ENCODE measurements at regions of chr2 and their contacts with region 1.

Region 1: DNA sequence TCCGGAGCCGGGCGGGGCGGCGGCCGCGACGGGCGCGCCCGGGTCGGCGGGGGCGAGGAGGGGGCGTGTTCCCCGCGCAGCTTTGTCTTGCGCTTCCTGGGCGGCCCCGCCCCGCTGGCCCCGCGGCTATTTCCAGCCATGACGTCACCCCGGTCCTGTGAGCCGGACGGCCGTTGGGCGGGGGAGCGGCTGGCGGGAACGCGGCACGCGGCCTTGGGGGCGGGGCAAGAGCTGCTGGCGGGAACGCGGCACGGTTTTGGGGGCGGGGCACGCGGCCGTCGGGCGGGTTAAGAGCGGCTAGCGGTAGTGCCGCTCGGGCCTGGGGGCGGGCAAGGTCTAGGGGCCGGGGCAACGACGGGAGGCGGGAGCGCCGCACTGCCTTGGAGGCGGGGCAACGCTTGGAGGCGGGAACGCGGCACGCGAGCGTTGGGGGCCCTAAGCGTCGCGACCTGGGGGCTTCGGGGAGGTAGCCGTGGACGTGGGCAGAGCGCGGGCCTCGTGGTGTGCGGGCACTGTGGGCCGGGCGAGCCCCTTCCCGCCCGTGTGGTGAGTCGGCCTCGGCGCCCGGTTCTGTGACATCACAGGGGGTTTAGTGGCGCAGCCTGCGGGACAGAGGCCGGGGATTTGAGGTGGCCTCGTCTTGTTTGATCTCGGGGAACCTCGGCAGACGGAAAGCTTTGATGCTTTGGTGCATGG is 704 bp downstream of the KLF11 start:
- DNase-seq: peak in 1 of 2 donors; percentile 96
- H3K4me3 ChIP-seq: peak overlapping the region; percentile 64 to 96
- H3K27ac ChIP-seq: peak overlapping the region; percentile 97
- H3K4me1 ChIP-seq: peaks cover 76% of the 10 kb centered on the region
- H3K27me3 ChIP-seq: no peaks in the 10 kb centered on the region
- CTCF ChIP-seq: no peak
- POLR2A ChIP-seq: peak in 1 of 2 donors; percentile 28

Region 2: GRCh38 chr2:9813312-9814133 is 230.5 kb before region 1 on chr2:
- intact Hi-C with region 1: loop called (anchors 5 kb)
- DNase-seq: peak; percentile 84 to 94
- H3K4me3 ChIP-seq: no peak overlapping the region
- H3K27ac ChIP-seq: peak overlapping the region; percentile 43
- H3K4me1 ChIP-seq: peaks cover 18% of the 10 kb centered on the region
- H3K27me3 ChIP-seq: no peaks in the 10 kb centered on the region
- CTCF ChIP-seq: peak; percentile 84 to 98 (median 86)
- POLR2A ChIP-seq: no peak

Region 3: GRCh38 chr2:9984217-9984739 is 59.8 kb before region 1 on chr2:
- intact Hi-C with region 1: loop called (anchors 5 kb)
- DNase-seq: peak in 1 of 2 donors; percentile 87
- H3K4me3 ChIP-seq: no peak overlapping the region
- H3K27ac ChIP-seq: peak overlapping the region; percentile 72
- H3K4me1 ChIP-seq: peaks cover 19% of the 10 kb centered on the region
- H3K27me3 ChIP-seq: no peaks in the 10 kb centered on the region
- CTCF ChIP-seq: peak; percentile 38 to 91 (median 86)
- POLR2A ChIP-seq: no peak

Region 4: DNA sequence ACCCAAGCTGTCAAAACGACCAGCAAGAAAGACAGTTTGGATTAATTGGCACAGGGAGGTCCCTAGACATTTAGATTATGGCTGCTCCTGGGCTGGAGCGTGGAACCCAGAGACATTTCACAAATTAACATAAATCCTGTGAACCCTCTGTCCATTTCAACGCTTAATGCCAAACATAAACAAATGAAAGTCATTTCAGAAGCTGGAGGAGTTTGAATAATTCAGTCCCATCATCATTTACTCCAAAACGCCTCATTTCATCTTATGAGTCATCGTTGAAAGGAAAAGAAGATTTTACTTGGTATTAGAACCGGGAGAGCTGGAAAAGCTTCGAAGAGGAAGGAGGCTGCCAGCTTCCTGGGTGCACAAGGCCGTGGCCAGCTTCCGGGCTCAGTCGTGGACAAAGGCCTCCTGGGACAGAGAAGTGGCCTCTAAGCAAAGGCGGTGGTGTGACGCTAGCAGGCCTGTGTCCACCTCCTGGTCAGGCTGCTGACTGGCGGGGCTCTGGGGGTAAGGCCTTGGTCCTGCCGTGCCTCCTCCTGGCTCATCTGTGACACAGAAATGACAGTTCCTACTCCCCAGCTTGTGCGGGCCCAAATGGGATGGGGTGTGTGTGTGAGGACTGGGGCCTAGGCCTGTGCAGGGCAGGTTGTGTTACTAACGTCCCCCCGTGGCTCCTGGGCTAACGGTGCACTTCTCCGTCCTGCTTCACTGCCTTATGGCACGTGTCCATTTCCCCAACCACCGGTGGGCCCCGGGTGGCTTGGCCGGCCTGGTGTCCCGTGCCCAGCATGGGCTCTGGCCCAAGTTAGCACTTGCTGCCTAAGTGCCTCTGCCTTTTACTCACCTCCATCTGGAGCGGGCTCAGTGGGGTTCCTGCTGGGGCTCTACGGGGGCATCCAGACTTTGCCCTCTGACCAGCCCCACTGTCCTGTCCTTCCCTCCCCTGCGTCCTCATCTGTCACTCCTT is 150.1 kb after region 1 on chr2:
- intact Hi-C with region 1: no loop called
- DNase-seq: no peak
- H3K4me3 ChIP-seq: no peak overlapping the region
- H3K27ac ChIP-seq: peak overlapping the region; percentile 13
- H3K4me1 ChIP-seq: peaks cover 19% of the 10 kb centered on the region
- H3K27me3 ChIP-seq: no peaks in the 10 kb centered on the region
- CTCF ChIP-seq: no peak
- POLR2A ChIP-seq: no peak

Measured in vagina (tissue), 2 donors.